Activated naive CD4-positive, alpha-beta T cell treated with anti-CD3 and anti-CD28 coated beads for 36 hours (primary cell): ENCODE measurements at regions of chr4 and their contacts with region 1.

Region 1: DNA sequence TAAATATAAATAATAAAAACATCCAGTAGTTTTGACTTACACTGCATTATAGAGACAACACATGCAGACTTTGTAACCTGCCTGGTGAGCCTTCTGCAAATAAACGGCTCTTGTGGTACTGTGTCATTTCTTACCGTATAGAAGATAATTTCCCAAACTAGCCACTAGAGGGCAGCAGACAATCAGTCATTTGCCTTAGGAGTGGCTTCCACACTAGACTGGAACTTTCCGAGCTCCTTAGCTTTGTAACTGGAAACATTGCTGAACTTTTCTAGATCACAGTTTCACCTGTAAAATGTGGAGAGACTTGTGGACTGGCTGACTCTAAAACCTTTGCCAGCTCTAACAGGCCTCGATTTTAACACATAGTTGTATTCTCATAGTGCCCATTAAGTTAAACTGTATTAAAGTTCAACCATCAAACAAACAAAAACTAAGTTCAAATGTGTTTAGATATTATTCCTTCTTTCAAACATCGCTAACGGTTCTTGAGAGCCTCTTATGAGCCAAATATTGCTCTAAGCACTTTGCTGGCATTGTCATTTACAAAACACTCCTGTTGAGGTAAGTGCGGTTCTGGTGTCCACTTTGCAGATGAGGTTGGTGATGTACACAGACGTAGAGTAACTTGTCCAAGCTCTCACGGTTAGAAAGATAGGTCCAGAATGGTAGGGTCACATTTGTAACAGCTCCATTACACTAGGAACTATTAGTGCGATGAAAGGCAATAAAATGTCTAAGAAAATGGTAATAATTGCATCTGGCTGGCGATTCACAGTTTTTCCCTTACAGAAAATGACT is 345.5 kb downstream of the ANK2 start:
- DNase-seq: peak; percentile 70
- H3K4me3 Mint-ChIP-seq: no peak overlapping the region
- H3K27ac Mint-ChIP-seq: no peak overlapping the region
- H3K4me1 Mint-ChIP-seq: no peaks in the 10 kb centered on the region
- H3K27me3 Mint-ChIP-seq: peaks cover 1% of the 10 kb centered on the region

Region 2: GRCh38 chr4:113278324-113278934 is 116.5 kb before region 1 on chr4:
- CTCF ChIA-PET with region 1: interaction called, 5 read pairs
- intact Hi-C with region 1: loop called (anchors 1 kb)
- DNase-seq: peak; percentile 88
- H3K4me3 Mint-ChIP-seq: no peak overlapping the region
- H3K27ac Mint-ChIP-seq: no peak overlapping the region
- H3K4me1 Mint-ChIP-seq: no peaks in the 10 kb centered on the region
- H3K27me3 Mint-ChIP-seq: peaks cover 15% of the 10 kb centered on the region

Region 3: GRCh38 chr4:113636438-113636818 is 241.5 kb after region 1 on chr4:
- CTCF ChIA-PET with region 1: interaction called, 5 read pairs
- intact Hi-C with region 1: loop called (anchors 2 kb)
- DNase-seq: peak; percentile 26
- H3K4me3 Mint-ChIP-seq: peak overlapping the region; percentile 23
- H3K27ac Mint-ChIP-seq: peak overlapping the region; percentile 83
- H3K4me1 Mint-ChIP-seq: peaks cover 46% of the 10 kb centered on the region
- H3K27me3 Mint-ChIP-seq: no peaks in the 10 kb centered on the region

Region 4: GRCh38 chr4:113908829-113909228 is 513.9 kb after region 1 on chr4:
- CTCF ChIA-PET with region 1: interaction called, 4 read pairs
- intact Hi-C with region 1: loop called (anchors 1 kb)
- DNase-seq: no peak
- H3K4me3 Mint-ChIP-seq: no peak overlapping the region
- H3K27ac Mint-ChIP-seq: no peak overlapping the region
- H3K4me1 Mint-ChIP-seq: peaks cover 25% of the 10 kb centered on the region
- H3K27me3 Mint-ChIP-seq: no peaks in the 10 kb centered on the region

Region 5: DNA sequence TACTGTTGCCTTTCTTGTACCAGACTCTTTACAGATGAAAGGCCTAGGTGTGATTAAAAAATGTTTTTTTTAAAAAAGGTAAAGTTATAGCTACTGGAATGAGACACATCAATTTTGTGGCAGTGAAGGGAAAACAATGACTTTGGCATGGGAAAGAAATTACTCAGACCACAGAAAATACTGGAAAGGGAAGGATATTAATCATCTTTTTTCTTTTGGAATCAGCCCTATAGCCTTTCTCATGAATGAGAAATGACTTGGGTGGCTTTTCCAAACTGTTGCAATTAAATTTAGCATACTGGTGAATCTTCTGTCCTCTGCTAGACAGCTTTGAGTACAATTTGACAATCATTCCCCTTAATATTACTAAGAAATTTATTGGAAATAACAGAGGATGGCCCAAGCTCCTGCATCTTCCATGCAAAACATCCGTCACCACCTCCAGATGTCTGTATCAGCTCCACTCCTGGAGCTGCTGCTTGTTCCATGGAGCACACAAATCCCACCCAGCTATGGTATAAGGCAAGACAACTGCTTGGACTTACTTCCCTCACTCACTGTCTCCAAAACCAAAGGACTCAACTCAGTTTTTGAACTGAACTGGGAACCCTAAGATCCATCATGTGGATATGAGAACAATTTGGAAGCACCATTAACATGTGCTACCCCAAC is 682.1 kb after region 1 on chr4:
- CTCF ChIA-PET with region 1: interaction called, 18 read pairs
- intact Hi-C with region 1: no loop called
- DNase-seq: no peak
- H3K4me3 Mint-ChIP-seq: no peak overlapping the region
- H3K27ac Mint-ChIP-seq: no peak overlapping the region
- H3K4me1 Mint-ChIP-seq: no peaks in the 10 kb centered on the region
- H3K27me3 Mint-ChIP-seq: no peaks in the 10 kb centered on the region

Region 6: DNA sequence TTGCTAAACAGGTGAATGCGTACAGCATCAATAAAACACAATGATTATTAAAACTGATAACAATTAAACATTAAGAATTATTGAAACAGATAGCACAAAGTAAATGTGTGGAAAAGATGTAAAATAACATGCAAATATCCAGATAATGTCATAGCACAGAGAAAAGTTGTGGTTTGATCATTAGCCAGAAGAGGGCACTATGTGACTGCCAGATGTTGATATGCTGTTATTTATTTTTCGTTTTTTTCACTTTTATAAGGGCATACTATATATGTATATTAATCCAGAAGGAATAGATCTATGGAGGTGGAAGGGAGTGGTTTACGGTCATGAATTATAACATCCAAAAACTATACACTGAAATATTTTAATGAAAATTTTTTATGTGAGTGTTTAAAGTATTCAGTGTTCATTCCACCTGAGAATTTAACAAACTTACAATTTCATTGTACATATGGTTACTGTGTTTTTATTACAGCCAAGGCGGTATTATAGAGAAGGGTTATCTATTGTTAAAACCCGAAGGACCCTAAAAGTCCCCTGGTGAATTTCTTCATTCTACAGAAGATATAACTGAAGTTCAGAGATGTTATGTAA is 991.8 kb after region 1 on chr4:
- CTCF ChIA-PET with region 1: interaction called, 4 read pairs
- intact Hi-C with region 1: loop called (anchors 1 kb)
- DNase-seq: peak; percentile 7
- H3K4me3 Mint-ChIP-seq: no peak overlapping the region
- H3K27ac Mint-ChIP-seq: no peak overlapping the region
- H3K4me1 Mint-ChIP-seq: no peaks in the 10 kb centered on the region
- H3K27me3 Mint-ChIP-seq: peaks cover 4% of the 10 kb centered on the region

Region 7: GRCh38 chr4:114694770-114695169 is 1299.8 kb after region 1 on chr4:
- CTCF ChIA-PET with region 1: interaction called, 3 read pairs
- intact Hi-C with region 1: loop called (anchors 10 kb)
- DNase-seq: no peak
- H3K4me3 Mint-ChIP-seq: no peak overlapping the region
- H3K27ac Mint-ChIP-seq: no peak overlapping the region
- H3K4me1 Mint-ChIP-seq: no peaks in the 10 kb centered on the region
- H3K27me3 Mint-ChIP-seq: peaks cover 5% of the 10 kb centered on the region